Naive thymus-derived CD4-positive, alpha-beta T cell (primary cell): ENCODE measurements at regions of chr20 and their contacts with region 1.

Region 1: GRCh38 chr20:24100385-24101011 is 111.9 kb upstream of the GGTLC1 start:
- DNase-seq: peak; percentile 18 to 71 (median 59)
- ATAC-seq: peak; percentile 95
- H3K4me3 ChIP-seq: no peak overlapping the region
- H3K4me3 Mint-ChIP-seq: no peak overlapping the region
- H3K27ac ChIP-seq: no peak overlapping the region
- H3K27ac Mint-ChIP-seq: peak overlapping the region in 7 of 9 donors; percentile 1 to 82 (median 57)
- H3K4me1 ChIP-seq: peaks cover 0 to 4% of the 10 kb centered on the region in 2 donors
- H3K4me1 Mint-ChIP-seq: peaks cover 5 to 18% (median 8%) of the 10 kb centered on the region in 7 donors
- H3K27me3 ChIP-seq: no peaks in the 10 kb centered on the region
- H3K27me3 Mint-ChIP-seq: peaks cover 0 to 5% (median 0%) of the 10 kb centered on the region in 5 donors

Region 2: DNA sequence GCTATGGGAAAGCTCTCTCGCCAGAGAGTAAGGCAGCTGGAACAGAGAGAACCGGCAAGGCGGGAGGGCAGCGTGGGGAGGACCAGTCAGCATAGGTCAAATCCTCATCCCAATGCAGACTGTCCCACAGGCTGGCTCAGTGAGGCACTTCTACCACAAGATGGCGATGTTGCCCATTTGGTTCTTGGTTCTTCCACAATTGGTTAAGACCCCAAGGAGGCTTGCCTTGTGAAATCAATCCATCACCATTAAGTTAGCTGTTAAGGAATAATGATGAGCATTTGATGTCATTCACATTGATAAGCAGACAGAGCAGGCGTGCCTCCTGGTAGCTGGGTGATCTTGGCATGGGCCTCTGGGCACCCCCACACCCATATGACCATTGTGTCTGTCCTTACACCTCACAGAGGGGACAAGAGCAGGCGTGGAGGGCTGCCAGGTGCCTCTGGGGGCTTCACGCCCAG is 658.6 kb before region 1 on chr20:
- CTCF ChIA-PET with region 1: no interaction called
- POLR2A ChIA-PET with region 1: no interaction called
- intact Hi-C with region 1: loop called in 1 of 2 experiments (anchors 5 kb)
- DNase-seq: peak in 8 of 9 donors; percentile 15 to 49 (median 29)
- ATAC-seq: peak; percentile 81
- H3K4me3 ChIP-seq: no peak overlapping the region
- H3K4me3 Mint-ChIP-seq: no peak overlapping the region
- H3K27ac ChIP-seq: no peak overlapping the region
- H3K27ac Mint-ChIP-seq: no peak overlapping the region
- H3K4me1 ChIP-seq: no peaks in the 10 kb centered on the region
- H3K4me1 Mint-ChIP-seq: peaks cover 0 to 4% (median 0%) of the 10 kb centered on the region in 7 donors
- H3K27me3 ChIP-seq: no peaks in the 10 kb centered on the region
- H3K27me3 Mint-ChIP-seq: peaks cover 0 to 2% (median 0%) of the 10 kb centered on the region in 5 donors

Region 3: DNA sequence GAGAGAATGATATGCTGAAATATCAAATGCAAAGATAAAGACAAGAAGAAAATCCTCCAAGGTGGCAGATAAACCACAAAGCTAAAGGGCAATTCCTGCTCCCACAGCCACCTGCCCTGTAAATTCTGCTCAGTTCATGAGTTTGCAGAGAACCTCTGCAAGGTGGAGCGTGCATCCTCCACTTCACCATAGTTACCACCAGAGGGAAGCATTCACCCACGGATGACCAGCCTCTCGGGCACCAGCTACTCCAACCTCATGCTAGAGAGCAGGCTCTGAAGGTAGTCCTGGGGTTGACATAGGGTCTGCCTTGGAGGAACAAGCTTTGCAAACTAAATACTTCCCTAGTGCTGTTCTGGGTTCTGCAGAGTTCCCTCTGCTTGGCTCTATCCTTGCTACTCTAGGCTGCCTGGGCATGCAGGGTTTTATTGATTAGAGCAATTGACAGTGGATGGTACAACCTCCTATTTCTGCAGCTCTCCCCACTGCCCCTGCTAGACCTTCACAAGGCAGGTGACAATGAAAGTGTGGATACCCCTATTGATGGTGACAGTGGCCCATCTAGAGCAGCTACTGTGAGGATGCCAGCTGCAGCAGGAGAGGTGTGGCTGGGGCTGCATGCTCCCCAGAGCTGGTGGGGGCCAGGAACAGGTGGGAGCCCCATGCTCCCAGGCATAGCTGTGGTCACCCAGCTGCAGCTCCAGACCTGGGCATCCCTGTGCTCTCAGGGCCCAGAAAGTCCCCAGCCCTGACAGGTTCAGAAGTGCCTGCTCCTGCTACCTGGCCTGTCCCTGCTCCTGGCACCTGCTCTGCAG is 163.0 kb before region 1 on chr20:
- CTCF ChIA-PET with region 1: interaction called, 27 read pairs
- POLR2A ChIA-PET with region 1: no interaction called
- intact Hi-C with region 1: loop called (anchors 1 kb)
- DNase-seq: peak; percentile 43 to 80 (median 70)
- ATAC-seq: peak; percentile 97
- H3K4me3 ChIP-seq: no peak overlapping the region
- H3K4me3 Mint-ChIP-seq: no peak overlapping the region
- H3K27ac ChIP-seq: no peak overlapping the region
- H3K27ac Mint-ChIP-seq: peak overlapping the region in 2 of 9 donors; percentile 25 to 79
- H3K4me1 ChIP-seq: no peaks in the 10 kb centered on the region
- H3K4me1 Mint-ChIP-seq: no peaks in the 10 kb centered on the region
- H3K27me3 ChIP-seq: no peaks in the 10 kb centered on the region
- H3K27me3 Mint-ChIP-seq: peaks cover 0 to 7% (median 0%) of the 10 kb centered on the region in 5 donors

Region 4: GRCh38 chr20:24027229-24027628 is 73.3 kb before region 1 on chr20:
- CTCF ChIA-PET with region 1: interaction called, 5 read pairs
- POLR2A ChIA-PET with region 1: interaction called, 3 read pairs
- intact Hi-C with region 1: loop called (anchors 1 kb)
- DNase-seq: peak; percentile 45 to 93 (median 87)
- ATAC-seq: peak; percentile 99
- H3K4me3 ChIP-seq: peak overlapping the region; percentile 39
- H3K4me3 Mint-ChIP-seq: peak overlapping the region; percentile 26 to 81 (median 71)
- H3K27ac ChIP-seq: peak overlapping the region; percentile 83
- H3K27ac Mint-ChIP-seq: peak overlapping the region; percentile 95 to 99 (median 97)
- H3K4me1 ChIP-seq: peaks cover 17 to 29% of the 10 kb centered on the region in 2 donors
- H3K4me1 Mint-ChIP-seq: peaks cover 20 to 76% (median 62%) of the 10 kb centered on the region in 7 donors
- H3K27me3 ChIP-seq: no peaks in the 10 kb centered on the region
- H3K27me3 Mint-ChIP-seq: no peaks in the 10 kb centered on the region

Region 5: DNA sequence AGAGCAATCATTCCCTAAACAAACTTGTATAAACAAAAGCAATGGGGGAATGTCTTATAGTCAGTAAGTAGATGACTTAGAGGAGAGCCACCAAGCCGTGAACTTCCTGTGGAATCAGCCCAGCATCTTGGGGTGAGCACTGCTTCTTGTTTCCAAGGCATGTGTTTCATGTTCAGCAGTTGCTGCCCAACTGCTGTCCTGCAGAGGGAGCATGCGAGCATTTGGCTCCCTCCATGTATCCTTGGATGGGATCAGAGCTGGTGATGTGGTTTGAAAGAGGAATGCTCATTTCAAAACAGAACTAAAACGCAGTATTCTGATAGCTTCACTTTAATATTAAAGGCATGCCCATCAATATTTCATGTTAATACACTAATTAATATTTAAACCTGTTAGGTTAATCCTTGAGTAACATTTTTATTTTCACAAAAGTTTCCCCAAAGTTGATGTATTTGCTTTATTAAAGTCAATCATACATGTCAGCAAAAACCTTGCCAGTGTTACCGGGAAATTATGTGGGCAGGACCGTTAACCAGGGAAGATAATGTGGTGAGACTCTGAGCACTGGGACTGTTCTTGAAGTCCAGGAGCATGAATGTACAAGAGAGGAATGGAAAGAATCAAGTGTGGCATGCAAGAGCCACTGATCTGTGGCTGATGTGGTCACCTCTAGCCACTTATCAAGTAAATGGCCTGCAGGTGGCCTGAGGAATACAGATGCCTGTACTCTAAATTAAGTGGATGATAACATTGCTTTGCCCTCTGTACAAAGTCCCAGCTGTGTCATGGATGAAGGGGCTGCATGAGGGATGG is 60.3 kb after region 1 on chr20:
- CTCF ChIA-PET with region 1: no interaction called
- POLR2A ChIA-PET with region 1: no interaction called
- intact Hi-C with region 1: loop called in 1 of 2 experiments (anchors 5 kb)
- DNase-seq: peak in 2 of 9 donors; percentile 4 to 16
- ATAC-seq: no peak
- H3K4me3 ChIP-seq: no peak overlapping the region
- H3K4me3 Mint-ChIP-seq: no peak overlapping the region
- H3K27ac ChIP-seq: no peak overlapping the region
- H3K27ac Mint-ChIP-seq: peak overlapping the region in 1 of 9 donors; percentile 23
- H3K4me1 ChIP-seq: no peaks in the 10 kb centered on the region
- H3K4me1 Mint-ChIP-seq: peaks cover 0 to 6% (median 4%) of the 10 kb centered on the region in 7 donors
- H3K27me3 ChIP-seq: no peaks in the 10 kb centered on the region
- H3K27me3 Mint-ChIP-seq: peaks cover 0 to 2% (median 0%) of the 10 kb centered on the region in 5 donors

Region 6: DNA sequence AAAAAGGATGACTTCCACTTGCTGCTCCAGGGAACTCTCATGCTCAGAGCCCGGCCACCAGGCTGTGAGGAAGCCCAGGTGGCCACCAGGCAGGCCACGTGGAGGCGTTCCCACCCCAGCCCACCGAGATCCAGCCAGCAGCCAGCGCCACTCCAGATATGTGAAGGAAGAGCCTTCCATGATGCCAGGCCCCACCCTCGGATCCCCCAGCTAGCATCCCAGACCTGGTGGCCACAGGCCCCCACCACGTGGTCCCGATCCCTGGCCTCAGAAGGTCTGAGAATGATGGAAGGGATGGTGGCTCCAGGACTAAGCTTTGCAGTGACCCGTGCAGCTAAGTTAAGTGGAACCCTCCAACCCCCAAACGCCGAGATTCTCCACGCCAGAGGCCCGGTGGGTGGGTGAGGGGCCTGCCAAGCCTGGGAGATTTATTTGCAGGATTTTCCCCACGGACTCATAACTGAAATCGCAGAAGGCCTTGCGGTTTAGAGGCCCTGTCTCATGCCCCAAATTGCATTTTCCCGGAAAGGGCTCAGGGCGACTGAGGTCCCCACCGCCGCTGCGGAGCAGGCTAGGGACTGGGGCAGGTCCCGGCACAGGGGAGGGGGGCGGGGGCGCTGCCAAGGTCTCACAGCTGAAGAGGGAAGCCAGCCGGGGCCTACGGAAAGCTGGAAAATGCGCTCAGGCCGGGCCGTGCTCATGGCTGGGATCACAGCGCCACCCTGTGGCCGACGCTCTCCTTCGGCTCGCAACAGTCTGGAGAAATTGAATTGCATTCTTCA is 817.5 kb after region 1 on chr20:
- CTCF ChIA-PET with region 1: no interaction called
- POLR2A ChIA-PET with region 1: no interaction called
- intact Hi-C with region 1: loop called in 1 of 2 experiments (anchors 1 kb)
- DNase-seq: peak in 7 of 9 donors; percentile 18 to 62 (median 26)
- ATAC-seq: peak; percentile 79
- H3K4me3 ChIP-seq: no peak overlapping the region
- H3K4me3 Mint-ChIP-seq: no peak overlapping the region
- H3K27ac ChIP-seq: no peak overlapping the region
- H3K27ac Mint-ChIP-seq: peak overlapping the region in 2 of 9 donors; percentile 5 to 51
- H3K4me1 ChIP-seq: peaks cover 0 to 4% of the 10 kb centered on the region in 2 donors
- H3K4me1 Mint-ChIP-seq: peaks cover 0 to 9% (median 4%) of the 10 kb centered on the region in 7 donors
- H3K27me3 ChIP-seq: no peaks in the 10 kb centered on the region
- H3K27me3 Mint-ChIP-seq: peaks cover 0 to 16% (median 8%) of the 10 kb centered on the region in 5 donors

Region 7: GRCh38 chr20:25178563-25179438 is 1078.3 kb after region 1 on chr20:
- CTCF ChIA-PET with region 1: no interaction called
- POLR2A ChIA-PET with region 1: no interaction called
- intact Hi-C with region 1: loop called in 1 of 2 experiments (anchors 5 kb)
- DNase-seq: peak in 6 of 9 donors; percentile 21 to 52 (median 46)
- ATAC-seq: peak; percentile 82
- H3K4me3 ChIP-seq: no peak overlapping the region
- H3K4me3 Mint-ChIP-seq: no peak overlapping the region
- H3K27ac ChIP-seq: no peak overlapping the region
- H3K27ac Mint-ChIP-seq: peak overlapping the region in 1 of 9 donors; percentile 38
- H3K4me1 ChIP-seq: no peaks in the 10 kb centered on the region
- H3K4me1 Mint-ChIP-seq: no peaks in the 10 kb centered on the region
- H3K27me3 ChIP-seq: no peaks in the 10 kb centered on the region
- H3K27me3 Mint-ChIP-seq: peaks cover 4 to 27% (median 7%) of the 10 kb centered on the region in 5 donors